ENCODE measurements at regions of chr19 and their contacts with region 1.

Region 1: GRCh38 chr19:55599468-55600279 is at the start of gene FIZ1:
- DNase-seq: peak; percentile 100
- H3K4me3 Mint-ChIP-seq: peak within 1 kb of the TSS; percentile 97
- H3K27ac Mint-ChIP-seq: peak within 1 kb of the TSS; percentile 99
- H3K4me1 Mint-ChIP-seq: peaks cover 39% of the 10 kb centered on the region
- H3K27me3 Mint-ChIP-seq: no peaks in the 10 kb centered on the region
- CTCF ChIP-seq: no peak
- total RNA-seq, gene FIZ1: 13.5 and 16.3 TPM in 2 replicates

Region 2: DNA sequence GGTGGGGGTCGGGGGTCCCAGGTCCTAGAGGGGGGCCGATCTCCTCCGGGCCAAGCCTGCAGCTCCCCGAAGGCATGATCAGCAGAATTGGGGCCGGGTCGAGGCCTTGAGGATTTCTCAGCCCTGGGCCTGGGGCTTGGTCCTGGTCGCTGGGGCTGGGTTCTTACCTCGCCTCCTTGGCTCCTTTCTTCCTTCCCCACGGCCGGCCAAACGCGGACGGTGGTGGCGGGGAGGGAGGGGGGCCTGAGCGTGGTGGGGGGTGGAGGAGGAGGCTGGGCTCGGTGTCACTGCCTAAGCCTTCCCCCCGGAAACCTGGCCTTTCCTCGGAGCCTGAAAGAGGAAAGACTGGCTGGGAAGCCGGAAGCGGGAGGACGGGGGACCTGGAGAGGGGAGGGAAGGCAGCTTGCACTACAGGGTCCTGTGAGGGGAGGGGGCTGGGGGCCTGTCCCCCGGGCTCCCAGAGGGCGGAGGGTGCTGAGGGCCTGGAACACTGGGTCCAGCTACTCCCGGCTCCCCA is 19.0 kb before region 1 on chr19 and contains the start of gene ZNF579:
- CTCF ChIA-PET with region 1: no interaction called
- POLR2A ChIA-PET with region 1: interaction called, 23 read pairs
- intact Hi-C with region 1: no loop called
- DNase-seq: peak; percentile 86
- H3K4me3 Mint-ChIP-seq: peak within 1 kb of the TSS; percentile 89
- H3K27ac Mint-ChIP-seq: peak within 1 kb of the TSS; percentile 91
- H3K4me1 Mint-ChIP-seq: peaks cover 26% of the 10 kb centered on the region
- H3K27me3 Mint-ChIP-seq: peaks cover 16% of the 10 kb centered on the region
- CTCF ChIP-seq: no peak
- total RNA-seq, gene ZNF579: 11.6 and 12.6 TPM in 2 replicates

Region 3: GRCh38 chr19:55586976-55587668 is 12.6 kb before region 1 on chr19:
- CTCF ChIA-PET with region 1: interaction called, 3 read pairs
- POLR2A ChIA-PET with region 1: interaction called, 26 read pairs
- intact Hi-C with region 1: no loop called
- DNase-seq: peak; percentile 94
- H3K4me3 Mint-ChIP-seq: peak overlapping the region; percentile 71
- H3K27ac Mint-ChIP-seq: no peak overlapping the region
- H3K4me1 Mint-ChIP-seq: peaks cover 7% of the 10 kb centered on the region
- H3K27me3 Mint-ChIP-seq: peaks cover 18% of the 10 kb centered on the region
- CTCF ChIP-seq: no peak

Region 4: GRCh38 chr19:55643348-55644176 is 43.9 kb after region 1 on chr19 and contains the start of gene ZNF581:
- CTCF ChIA-PET with region 1: no interaction called
- POLR2A ChIA-PET with region 1: interaction called, 15 read pairs
- intact Hi-C with region 1: loop called (anchors 1 kb)
- DNase-seq: peak; percentile 79
- H3K4me3 Mint-ChIP-seq: peak within 1 kb of the TSS; percentile 82
- H3K27ac Mint-ChIP-seq: peak within 1 kb of the TSS; percentile 94
- H3K4me1 Mint-ChIP-seq: peaks cover 18% of the 10 kb centered on the region
- H3K27me3 Mint-ChIP-seq: no peaks in the 10 kb centered on the region
- CTCF ChIP-seq: no peak
- total RNA-seq, gene ZNF581: 22.3 and 25.7 TPM in 2 replicates

Region 5: DNA sequence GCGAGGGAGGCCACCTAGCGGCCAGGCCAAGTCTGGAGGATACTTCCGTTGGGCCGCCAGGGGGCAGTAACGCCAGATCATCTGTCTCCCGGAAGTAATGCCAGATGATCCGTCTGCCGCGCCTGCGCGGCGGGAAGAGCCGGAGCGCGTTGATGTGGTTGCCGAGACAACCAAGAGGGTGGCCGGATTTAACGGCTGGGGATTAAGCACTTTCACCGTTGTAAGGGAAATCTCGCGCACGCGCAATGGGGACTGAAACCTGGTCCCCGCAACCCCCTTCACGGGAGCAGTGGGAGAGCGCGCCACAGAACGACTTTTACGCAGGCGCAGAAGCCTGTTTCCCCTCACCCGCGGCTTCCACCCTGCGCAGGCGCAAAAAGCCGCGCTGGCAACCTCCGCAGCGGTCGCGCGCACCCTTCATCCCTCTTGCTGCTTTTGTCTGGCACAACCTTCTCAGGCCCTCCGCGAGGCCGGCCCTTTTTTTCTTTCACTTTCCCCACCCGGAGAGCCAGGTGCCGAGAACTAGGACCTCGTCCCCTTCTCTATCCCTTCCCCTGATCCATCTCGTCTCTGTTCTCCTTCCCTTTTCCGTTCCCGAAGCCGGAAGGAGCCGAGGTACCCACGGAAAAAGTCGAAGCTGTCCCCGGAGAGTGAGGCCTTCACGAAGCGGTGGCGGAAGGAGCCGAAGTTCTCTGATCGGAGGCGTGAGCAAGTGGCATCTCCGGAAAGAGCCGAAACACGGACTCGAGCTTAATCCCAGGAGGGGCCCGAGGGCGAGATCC is 54.3 kb after region 1 on chr19:
- CTCF ChIA-PET with region 1: interaction called, 5 read pairs
- POLR2A ChIA-PET with region 1: interaction called, 10 read pairs
- intact Hi-C with region 1: no loop called
- DNase-seq: peak; percentile 100
- H3K4me3 Mint-ChIP-seq: peak overlapping the region; percentile 84
- H3K27ac Mint-ChIP-seq: peak overlapping the region; percentile 98
- H3K4me1 Mint-ChIP-seq: peaks cover 22% of the 10 kb centered on the region
- H3K27me3 Mint-ChIP-seq: no peaks in the 10 kb centered on the region
- CTCF ChIP-seq: peak; percentile 99

Region 6: DNA sequence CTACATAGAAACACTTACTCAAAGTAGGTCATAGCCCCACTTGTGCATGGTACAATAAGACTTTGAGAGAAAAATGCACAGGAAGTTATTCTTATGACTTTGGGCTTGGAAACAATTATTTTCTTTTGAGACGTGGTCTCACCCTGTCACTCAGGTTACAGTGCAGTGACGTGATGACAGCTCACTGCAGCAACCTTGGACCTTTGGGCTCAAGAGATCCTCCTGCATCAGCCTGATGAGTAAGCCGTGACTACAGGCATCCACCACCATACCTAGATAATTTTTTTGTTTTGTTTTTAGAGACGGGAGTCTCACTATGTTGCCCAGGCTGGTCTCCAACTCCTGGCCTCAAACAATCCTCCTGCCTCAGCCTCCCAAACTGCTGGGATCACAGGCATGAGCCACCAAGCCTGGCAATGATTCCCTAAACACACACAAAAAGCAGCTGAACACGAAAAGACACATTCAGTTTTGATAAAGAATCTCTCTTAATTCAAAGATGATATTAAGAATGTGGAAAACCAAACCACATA is 120.6 kb after region 1 on chr19:
- CTCF ChIA-PET with region 1: no interaction called
- POLR2A ChIA-PET with region 1: no interaction called
- intact Hi-C with region 1: no loop called
- DNase-seq: no peak
- H3K4me3 Mint-ChIP-seq: no peak overlapping the region
- H3K27ac Mint-ChIP-seq: no peak overlapping the region
- H3K4me1 Mint-ChIP-seq: no peaks in the 10 kb centered on the region
- H3K27me3 Mint-ChIP-seq: peaks cover 23% of the 10 kb centered on the region
- CTCF ChIP-seq: no peak

Measured in MCF 10A (cell line).